Tibial artery (tissue), 4 donors: ENCODE measurements at regions of chr16 and their contacts with region 1.

Region 1: GRCh38 chr16:23556881-23557778 is at the starts of genes EARS2 and UBFD1:
- DNase-seq: peak; percentile 98 to 99
- H3K4me3 ChIP-seq: peak within 1 kb of the TSS; percentile 95 to 96
- H3K27ac ChIP-seq: peak within 1 kb of the TSS; percentile 91 to 95
- H3K4me1 ChIP-seq: peaks cover 0 to 43% (median 30%) of the 10 kb centered on the region in 4 donors
- H3K27me3 ChIP-seq: no peaks in the 10 kb centered on the region
- CTCF ChIP-seq: peak; percentile 86 to 92

Region 2: GRCh38 chr16:23510164-23510914 is 46.8 kb before region 1 on chr16 and contains the start of gene GGA2:
- intact Hi-C with region 1: loop called (anchors 5 kb)
- DNase-seq: peak; percentile 78 to 93
- H3K4me3 ChIP-seq: peak within 1 kb of the TSS; percentile 72 to 99
- H3K27ac ChIP-seq: peak within 1 kb of the TSS; percentile 78 to 91
- H3K4me1 ChIP-seq: peaks cover 0 to 38% (median 14%) of the 10 kb centered on the region in 4 donors
- H3K27me3 ChIP-seq: no peaks in the 10 kb centered on the region
- CTCF ChIP-seq: no peak

Region 3: GRCh38 chr16:23595951-23596720 is 39.0 kb after region 1 on chr16 and contains the start of gene NDUFAB1:
- intact Hi-C with region 1: loop called (anchors 5 kb)
- DNase-seq: peak; percentile 86 to 93
- H3K4me3 ChIP-seq: peak within 1 kb of the TSS; percentile 80 to 88
- H3K27ac ChIP-seq: peak within 1 kb of the TSS; percentile 80 to 83
- H3K4me1 ChIP-seq: peaks cover 0 to 18% (median 14%) of the 10 kb centered on the region in 4 donors
- H3K27me3 ChIP-seq: no peaks in the 10 kb centered on the region
- CTCF ChIP-seq: peak; percentile 99 to 100